ENCODE measurements at regions of chr11 and their contacts with region 1.

Region 1: GRCh38 chr11:130434521-130435223 is 6.3 kb upstream of the ADAMTS8 start:
- DNase-seq: peak; percentile 84 to 87
- ATAC-seq: peak; percentile 94
- H3K4me3 ChIP-seq: peak overlapping the region; percentile 33 to 82
- H3K27ac ChIP-seq: peak overlapping the region in 1 of 2 donors; percentile 81
- H3K4me1 ChIP-seq: no peaks in the 10 kb centered on the region
- H3K27me3 ChIP-seq: no peaks in the 10 kb centered on the region

Region 2: DNA sequence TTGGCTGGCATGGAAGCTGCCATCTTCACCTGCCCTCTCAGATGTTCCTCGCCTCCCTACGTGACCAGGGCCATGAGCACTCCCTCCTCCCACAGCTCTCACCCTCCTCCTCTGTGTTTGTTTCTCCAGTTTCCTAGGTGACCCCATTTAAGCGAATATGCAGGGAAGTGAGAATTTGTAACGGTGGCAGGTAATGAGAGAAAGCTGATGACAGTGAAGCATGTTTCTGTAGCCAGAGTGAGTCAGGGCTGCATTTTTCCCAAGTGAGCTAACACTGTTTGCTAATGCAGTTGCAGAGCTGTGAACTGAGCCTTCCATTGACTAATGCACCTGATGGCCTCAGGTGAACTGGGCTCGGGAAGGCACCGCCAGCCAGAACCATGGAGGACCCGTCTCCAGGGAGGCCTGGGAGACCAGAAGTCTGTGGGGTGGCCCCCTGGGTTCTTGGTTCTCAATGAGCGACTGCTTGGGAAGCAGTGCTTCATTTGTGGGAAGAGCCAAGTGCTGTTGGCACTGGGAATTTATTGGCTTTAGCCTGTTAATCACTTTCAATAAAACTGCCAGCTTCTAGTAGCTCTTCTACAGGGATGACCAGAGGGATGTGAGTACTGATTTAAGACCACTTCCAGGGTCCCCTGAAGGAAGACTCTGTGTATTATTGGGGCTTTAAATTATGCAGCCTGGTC is 994.5 kb before region 1 on chr11:
- intact Hi-C with region 1: no loop called
- DNase-seq: no peak
- ATAC-seq: no peak
- H3K4me3 ChIP-seq: no peak overlapping the region
- H3K27ac ChIP-seq: no peak overlapping the region
- H3K4me1 ChIP-seq: no peaks in the 10 kb centered on the region
- H3K27me3 ChIP-seq: no peaks in the 10 kb centered on the region

Region 3: DNA sequence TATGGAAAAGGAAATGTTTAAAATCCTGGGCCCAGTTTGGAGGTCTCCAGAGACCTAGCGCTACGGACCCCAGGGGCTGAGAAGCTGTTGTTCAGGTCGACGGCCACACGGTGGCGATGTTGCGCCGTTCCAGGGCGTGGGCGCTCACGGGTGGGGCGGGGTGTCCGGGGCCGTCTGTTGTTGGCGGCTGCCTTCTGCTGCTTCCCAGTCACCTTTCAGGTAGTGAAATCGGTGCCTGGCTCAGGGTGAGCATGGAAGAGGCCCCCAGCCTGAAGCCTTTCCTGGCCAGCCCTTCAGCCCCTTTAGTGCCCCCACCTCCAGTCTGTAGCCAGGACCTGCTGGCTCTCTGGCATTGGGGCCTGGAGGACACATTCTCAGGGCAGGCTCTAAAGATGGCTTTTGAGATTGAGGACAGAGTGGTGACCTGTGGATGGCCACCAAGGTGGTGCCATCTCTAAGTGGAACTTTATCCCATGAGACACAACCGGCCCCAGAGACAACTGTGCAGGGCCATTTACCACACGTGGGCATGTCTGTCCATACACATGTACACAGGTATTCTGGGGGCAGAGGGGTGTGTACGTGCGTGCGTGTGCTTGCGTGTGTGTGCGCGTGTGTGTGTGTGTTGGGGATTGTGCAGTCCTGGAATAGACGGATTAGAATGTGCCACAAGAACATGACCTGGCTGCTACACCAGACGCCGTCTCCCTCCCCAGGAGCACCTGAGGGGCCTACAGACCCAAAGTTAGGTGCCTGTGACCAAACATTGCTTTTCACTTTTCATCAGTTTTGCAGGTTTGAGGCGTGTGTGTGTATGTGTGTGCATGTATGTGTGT is 221.3 kb before region 1 on chr11:
- intact Hi-C with region 1: loop called (anchors 2 to 5 kb)
- DNase-seq: peak in 1 of 2 donors; percentile 91
- ATAC-seq: peak; percentile 77
- H3K4me3 ChIP-seq: no peak overlapping the region
- H3K27ac ChIP-seq: no peak overlapping the region
- H3K4me1 ChIP-seq: no peaks in the 10 kb centered on the region
- H3K27me3 ChIP-seq: no peaks in the 10 kb centered on the region

Region 4: GRCh38 chr11:130827451-130828377 is 393.0 kb after region 1 on chr11:
- intact Hi-C with region 1: loop called (anchors 1 to 2 kb)
- DNase-seq: peak; percentile 81 to 87
- ATAC-seq: peak; percentile 55
- H3K4me3 ChIP-seq: no peak overlapping the region
- H3K27ac ChIP-seq: no peak overlapping the region
- H3K4me1 ChIP-seq: no peaks in the 10 kb centered on the region
- H3K27me3 ChIP-seq: no peaks in the 10 kb centered on the region

Region 5: GRCh38 chr11:130861902-130862860 is 427.5 kb after region 1 on chr11:
- intact Hi-C with region 1: loop called (anchors 1 kb)
- DNase-seq: peak; percentile 94 to 98
- ATAC-seq: peak; percentile 92
- H3K4me3 ChIP-seq: no peak overlapping the region
- H3K27ac ChIP-seq: peak overlapping the region; percentile 10 to 74
- H3K4me1 ChIP-seq: peaks cover 0 to 6% of the 10 kb centered on the region in 2 donors
- H3K27me3 ChIP-seq: no peaks in the 10 kb centered on the region

Region 6: GRCh38 chr11:130894322-130895025 is 459.8 kb after region 1 on chr11:
- intact Hi-C with region 1: loop called (anchors 2 kb)
- DNase-seq: peak; percentile 70 to 87
- ATAC-seq: peak; percentile 73
- H3K4me3 ChIP-seq: no peak overlapping the region
- H3K27ac ChIP-seq: peak overlapping the region; percentile 16 to 90
- H3K4me1 ChIP-seq: peaks cover 0 to 2% of the 10 kb centered on the region in 2 donors
- H3K27me3 ChIP-seq: no peaks in the 10 kb centered on the region

Measured in aorta (tissue), 5 donors.